Keratinocyte (primary cell): ENCODE measurements at regions of chr17 and their contacts with region 1.

Region 1: GRCh38 chr17:49997791-49998703 is 3.0 kb upstream of the DLX3 start:
- DNase-seq: no peak
- H3K4me3 ChIP-seq: no peak overlapping the region
- H3K27ac ChIP-seq: no peak overlapping the region
- H3K4me1 ChIP-seq: peaks cover 33% of the 10 kb centered on the region
- H3K27me3 ChIP-seq: peaks cover 59% of the 10 kb centered on the region
- CTCF ChIP-seq: peak; percentile 84 to 96 (median 85)

Region 2: GRCh38 chr17:49880291-49881053 is 117.6 kb before region 1 on chr17:
- dilution Hi-C with region 1: loop called (anchors 10 kb)
- DNase-seq: no peak
- H3K4me3 ChIP-seq: no peak overlapping the region
- H3K27ac ChIP-seq: no peak overlapping the region
- H3K4me1 ChIP-seq: no peaks in the 10 kb centered on the region
- H3K27me3 ChIP-seq: peaks cover 21% of the 10 kb centered on the region
- CTCF ChIP-seq: peak; percentile 88 to 99 (median 93)

Region 3: GRCh38 chr17:49968380-49969133 is 29.5 kb before region 1 on chr17:
- dilution Hi-C with region 1: no loop called
- DNase-seq: no peak
- H3K4me3 ChIP-seq: peak overlapping the region; percentile 32 to 68 (median 63)
- H3K27ac ChIP-seq: peak overlapping the region; percentile 5
- H3K4me1 ChIP-seq: peaks cover 10% of the 10 kb centered on the region
- H3K27me3 ChIP-seq: peaks cover 90% of the 10 kb centered on the region
- CTCF ChIP-seq: peak in 1 of 3 experiments; percentile 34

Region 4: DNA sequence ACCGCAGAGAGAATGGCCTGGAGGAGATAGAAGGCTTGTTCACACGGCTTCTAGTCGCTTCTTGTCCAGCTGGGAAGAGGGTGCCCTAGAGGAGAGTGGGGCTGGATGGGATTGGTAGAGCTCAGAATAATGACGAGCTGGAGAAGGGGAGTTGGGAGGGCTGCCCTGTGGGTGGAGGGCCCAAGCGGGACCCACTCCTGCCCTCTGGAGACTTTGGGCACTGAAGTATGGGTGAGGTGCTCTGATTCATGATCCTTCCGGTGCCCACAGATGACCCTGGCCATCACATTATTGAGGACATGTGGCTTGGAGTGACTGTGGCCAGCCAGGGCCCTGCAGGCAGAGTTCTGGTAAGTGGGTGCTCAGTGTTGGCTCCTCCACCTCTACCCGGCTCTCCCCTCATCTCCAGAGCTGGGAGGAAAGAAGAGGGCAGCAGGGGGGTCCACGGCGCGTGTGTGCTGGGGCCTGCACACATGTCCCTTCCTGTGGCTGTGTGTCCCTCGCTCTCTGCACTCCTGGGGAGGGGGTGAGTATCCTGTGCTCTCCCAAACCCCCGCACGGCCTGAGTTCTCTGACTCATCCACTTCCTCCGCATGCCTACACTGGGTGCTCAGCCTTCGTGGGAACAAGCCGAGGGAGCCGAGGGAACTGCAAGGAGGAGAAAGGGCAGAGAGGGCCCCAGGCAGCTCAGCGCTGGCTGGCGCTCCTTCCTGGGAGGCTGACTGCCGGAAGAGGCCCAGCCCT is 66.4 kb after region 1 on chr17:
- dilution Hi-C with region 1: no loop called
- DNase-seq: no peak
- H3K4me3 ChIP-seq: peak overlapping the region in 2 of 3 experiments; percentile 41 to 44
- H3K27ac ChIP-seq: peak overlapping the region; percentile 95
- H3K4me1 ChIP-seq: peaks cover 58% of the 10 kb centered on the region
- H3K27me3 ChIP-seq: no peaks in the 10 kb centered on the region
- CTCF ChIP-seq: no peak

Region 5: GRCh38 chr17:50079334-50080095 is 81.5 kb after region 1 on chr17:
- dilution Hi-C with region 1: no loop called
- DNase-seq: no peak
- H3K4me3 ChIP-seq: no peak overlapping the region
- H3K27ac ChIP-seq: no peak overlapping the region
- H3K4me1 ChIP-seq: no peaks in the 10 kb centered on the region
- H3K27me3 ChIP-seq: no peaks in the 10 kb centered on the region
- CTCF ChIP-seq: peak; percentile 98 to 100 (median 100)

Region 6: GRCh38 chr17:50798424-50799288 is 800.6 kb after region 1 on chr17:
- dilution Hi-C with region 1: no loop called
- DNase-seq: peak; percentile 74
- H3K4me3 ChIP-seq: peak overlapping the region in 1 of 3 experiments; percentile 9
- H3K27ac ChIP-seq: peak overlapping the region; percentile 67
- H3K4me1 ChIP-seq: peaks cover 47% of the 10 kb centered on the region
- H3K27me3 ChIP-seq: no peaks in the 10 kb centered on the region
- CTCF ChIP-seq: no peak